SK-N-SH (cell line): ENCODE measurements at regions of chr2 and their contacts with region 1.

Region 1: GRCh38 chr2:44560352-44560751 is 198.6 kb downstream of the CAMKMT start:
- DNase-seq: no peak
- H3K4me3 ChIP-seq: no peak overlapping the region
- H3K27ac ChIP-seq: no peak overlapping the region
- H3K4me1 ChIP-seq: peaks cover 0 to under 1% of the 10 kb centered on the region in 2 experiments; a peak in 2 of 4 replicates
- H3K27me3 ChIP-seq: no peaks in the 10 kb centered on the region
- CTCF ChIP-seq: peak; percentile 56
- EP300 ChIP-seq: no peak
- RAD21 ChIP-seq: peak; percentile 63

Region 2: GRCh38 chr2:44549095-44549463 is 11.3 kb before region 1 on chr2:
- CTCF ChIA-PET with region 1: interaction called, 42 read pairs
- POLR2A ChIA-PET with region 1: interaction called, 3 read pairs
- DNase-seq: no peak
- H3K4me3 ChIP-seq: peak overlapping the region; percentile 5 to 18; a peak in 2 of 4 replicates
- H3K27ac ChIP-seq: peak overlapping the region; percentile 75 to 92; a peak in 3 of 4 replicates
- H3K4me1 ChIP-seq: peaks cover 46 to 47% of the 10 kb centered on the region in 2 experiments
- H3K27me3 ChIP-seq: no peaks in the 10 kb centered on the region
- CTCF ChIP-seq: no peak
- EP300 ChIP-seq: peak; percentile 30 to 85; a peak in 3 of 4 replicates
- RAD21 ChIP-seq: no peak

Region 3: DNA sequence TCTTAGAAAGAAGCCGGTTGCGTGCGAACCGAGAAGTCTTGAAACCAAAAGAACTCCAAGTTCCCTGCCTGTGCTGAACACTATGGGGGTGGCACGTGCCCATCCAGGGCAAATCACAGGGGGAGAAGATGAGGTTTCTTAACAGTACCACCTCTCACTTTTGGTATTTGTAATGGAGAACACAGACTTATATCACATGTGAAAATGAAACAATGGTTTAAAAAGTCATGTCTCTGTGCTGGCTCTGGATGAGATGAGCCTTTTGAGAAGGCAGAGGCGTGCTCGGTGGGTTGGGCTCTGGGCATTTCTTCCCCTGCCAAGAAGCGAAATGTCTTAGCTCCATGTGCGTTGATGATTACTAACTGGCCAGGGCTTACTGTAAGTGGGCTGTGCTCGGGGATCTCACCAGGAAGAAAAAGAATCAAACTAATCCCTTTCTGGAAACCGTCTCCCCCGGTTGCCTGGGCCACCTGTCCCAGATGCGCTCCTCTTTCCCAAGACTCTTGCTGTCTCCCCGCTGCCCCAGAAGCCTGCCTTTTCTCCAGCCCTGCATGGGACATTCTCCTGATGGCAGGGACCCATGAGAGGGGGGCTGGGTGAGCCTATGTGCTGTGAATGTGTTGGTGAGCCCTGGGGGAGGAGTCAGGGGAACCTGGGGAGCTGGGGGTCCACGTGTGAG is 1344.1 kb after region 1 on chr2:
- CTCF ChIA-PET with region 1: no interaction called
- POLR2A ChIA-PET with region 1: no interaction called
- DNase-seq: no peak
- H3K4me3 ChIP-seq: no peak overlapping the region
- H3K27ac ChIP-seq: no peak overlapping the region
- H3K4me1 ChIP-seq: peaks cover 5 to 6% of the 10 kb centered on the region in 2 experiments; a peak in 1 of 4 replicates
- H3K27me3 ChIP-seq: no peaks in the 10 kb centered on the region
- CTCF ChIP-seq: no peak
- EP300 ChIP-seq: no peak
- RAD21 ChIP-seq: no peak